Activated T-helper 1 cell treated with anti-CD3 and anti-CD28 coated beads, Interleukin-12 subunit alpha, Interleukin-12 subunit beta, Interleukin-2, Interleukin-4 antibody, amounts not matched to agents 30 ng/mL and 10 ng/mL and 1 ng/mL, durations not matched to agents 14 hours and 24 hours and 36 hours (primary cell): ENCODE measurements at regions of chr22 and their contacts with region 1.

Region 1: DNA sequence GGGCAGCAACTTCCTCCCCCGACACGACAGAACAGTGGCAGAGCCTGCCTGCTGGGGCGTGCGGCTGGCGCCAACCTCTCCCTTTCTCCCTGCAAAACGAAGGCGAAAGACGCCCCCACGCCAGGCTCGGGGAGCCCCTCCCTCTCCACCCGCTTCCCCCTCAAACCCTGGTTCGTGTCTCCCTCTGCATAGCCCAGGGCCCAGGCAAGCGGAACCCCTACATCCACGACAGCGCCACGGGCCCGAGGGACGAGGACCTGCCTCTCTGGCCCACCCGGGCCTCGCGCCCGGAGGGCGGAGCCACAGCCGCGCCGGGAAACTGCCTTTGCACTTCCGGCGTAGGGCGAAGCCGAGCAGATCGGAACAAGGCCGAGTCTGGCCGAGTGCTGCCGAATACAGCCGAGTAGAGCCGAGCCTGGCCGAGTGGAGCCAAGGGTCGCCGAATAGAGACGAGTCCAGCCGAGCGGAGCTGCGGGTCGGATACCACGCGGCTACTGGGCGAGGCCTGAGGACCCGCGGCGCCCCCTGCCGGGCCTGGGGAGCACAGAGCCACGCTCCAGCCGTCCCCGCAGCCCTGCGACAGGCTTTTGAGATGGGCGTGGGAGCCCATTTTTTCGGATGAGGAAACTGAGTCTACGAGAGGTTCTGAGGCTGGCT is 11.2 kb upstream of the C1QTNF6 start:
- DNase-seq: peak; percentile 99
- H3K4me3 Mint-ChIP-seq: peak overlapping the region; percentile 83
- H3K27ac Mint-ChIP-seq: peak overlapping the region; percentile 87
- H3K4me1 Mint-ChIP-seq: peaks cover 38% of the 10 kb centered on the region
- H3K27me3 Mint-ChIP-seq: no peaks in the 10 kb centered on the region

Region 2: DNA sequence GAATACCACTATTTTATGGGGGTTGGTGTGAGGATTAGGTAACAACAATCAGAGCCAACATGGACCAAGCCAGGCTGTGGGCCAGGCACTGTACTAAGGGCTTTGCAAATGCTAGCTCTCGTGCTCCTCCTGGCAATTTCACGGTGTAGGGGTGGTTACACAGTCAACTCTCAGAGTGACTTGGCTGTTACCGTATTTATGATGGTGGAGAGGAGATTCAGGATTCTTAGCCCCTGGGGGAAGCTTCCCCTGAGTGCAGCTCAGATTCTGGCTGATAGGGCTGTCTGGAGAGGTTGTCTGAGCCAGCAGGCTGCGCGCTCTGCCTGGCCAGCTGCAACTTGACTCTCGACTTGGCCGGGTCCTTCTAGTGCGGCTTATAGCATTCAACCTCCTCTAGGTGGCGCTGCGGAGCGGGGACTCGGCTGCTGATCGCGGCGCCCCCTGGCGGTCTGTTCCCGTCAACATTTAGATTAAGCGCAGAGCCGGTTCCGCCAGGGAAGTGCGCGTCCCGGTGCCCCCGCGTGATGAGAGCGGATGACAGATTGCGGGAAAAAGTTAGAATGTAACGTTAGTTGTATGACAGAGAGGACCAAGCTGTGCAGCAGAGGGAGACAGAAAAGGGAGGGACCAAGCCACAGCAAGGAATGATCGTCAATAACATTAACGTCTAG is 343.0 kb before region 1 on chr22:
- intact Hi-C with region 1: loop called (anchors 2 kb)
- DNase-seq: peak; percentile 90
- H3K4me3 Mint-ChIP-seq: peak overlapping the region; percentile 58
- H3K27ac Mint-ChIP-seq: peak overlapping the region; percentile 73
- H3K4me1 Mint-ChIP-seq: peaks cover 56% of the 10 kb centered on the region
- H3K27me3 Mint-ChIP-seq: peaks cover under 1% of the 10 kb centered on the region

Region 3: GRCh38 chr22:37043828-37044538 is 155.2 kb before region 1 on chr22:
- intact Hi-C with region 1: loop called (anchors 1 kb)
- DNase-seq: peak; percentile 39
- H3K4me3 Mint-ChIP-seq: no peak overlapping the region
- H3K27ac Mint-ChIP-seq: no peak overlapping the region
- H3K4me1 Mint-ChIP-seq: peaks cover 19% of the 10 kb centered on the region
- H3K27me3 Mint-ChIP-seq: no peaks in the 10 kb centered on the region

Region 4: DNA sequence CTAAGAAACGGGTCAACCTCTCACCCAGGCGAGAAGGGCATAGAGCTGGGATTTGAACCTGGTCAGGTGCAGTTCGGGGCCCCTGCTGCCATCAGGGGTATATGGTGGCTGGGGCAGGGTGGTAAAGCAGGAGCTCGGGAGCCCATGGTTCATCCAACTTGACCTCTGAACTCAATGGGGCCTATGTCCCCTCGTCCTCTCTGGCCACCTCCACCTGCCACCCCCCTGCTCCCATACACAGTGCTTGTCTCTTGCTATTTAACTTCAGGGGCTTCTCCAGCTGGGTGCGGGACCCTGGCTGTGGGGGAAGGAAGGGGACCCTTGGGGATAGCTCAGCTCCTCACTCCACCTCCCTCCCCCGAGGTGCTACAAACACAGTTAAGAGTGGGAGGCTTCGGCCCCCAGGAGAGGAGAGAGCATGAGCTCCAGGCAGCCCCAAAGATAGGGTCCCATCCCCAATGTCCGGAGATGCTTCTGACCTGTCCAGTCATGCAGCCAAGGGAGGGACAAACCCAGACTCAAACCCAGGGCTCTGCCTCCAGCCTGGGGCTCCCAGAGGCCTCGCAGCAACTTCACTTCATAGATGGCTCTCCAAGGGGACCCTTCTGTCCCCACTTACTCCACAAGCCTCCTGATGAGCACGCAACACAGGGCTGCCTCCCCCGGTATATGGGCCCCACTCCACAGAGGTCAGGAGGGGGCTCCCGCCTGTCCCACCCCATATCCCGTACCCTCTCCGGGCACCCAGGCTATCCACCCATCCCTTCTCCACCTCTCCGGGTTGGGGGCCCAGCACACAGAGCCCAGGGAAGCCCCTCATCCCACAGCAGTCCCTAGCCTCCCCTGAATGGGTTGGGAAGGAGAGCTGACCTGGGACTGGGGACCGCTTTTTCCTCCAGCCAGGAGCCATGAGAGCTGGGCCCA is 50.2 kb before region 1 on chr22:
- intact Hi-C with region 1: loop called (anchors 1 kb)
- DNase-seq: no peak
- H3K4me3 Mint-ChIP-seq: peak overlapping the region; percentile 92
- H3K27ac Mint-ChIP-seq: peak overlapping the region; percentile 93
- H3K4me1 Mint-ChIP-seq: peaks cover 72% of the 10 kb centered on the region
- H3K27me3 Mint-ChIP-seq: no peaks in the 10 kb centered on the region

Region 5: GRCh38 chr22:37229805-37230672 is 30.8 kb after region 1 on chr22:
- intact Hi-C with region 1: loop called (anchors 1 kb)
- DNase-seq: peak; percentile 87
- H3K4me3 Mint-ChIP-seq: peak overlapping the region; percentile 80
- H3K27ac Mint-ChIP-seq: peak overlapping the region; percentile 99
- H3K4me1 Mint-ChIP-seq: peaks cover 88% of the 10 kb centered on the region
- H3K27me3 Mint-ChIP-seq: no peaks in the 10 kb centered on the region